Activated CD4-positive, alpha-beta T cell treated with anti-CD3 and anti-CD28 coated beads, Interleukin-2, amount 10 ng/mL, durations not matched to agents 24 days and 14 days (primary cell): ENCODE measurements at regions of chr4 and their contacts with region 1.

Region 1: GRCh38 chr4:81471588-81472288 is at the start of gene RASGEF1B:
- DNase-seq: peak; percentile 98
- H3K4me3 Mint-ChIP-seq: peak within 1 kb of the TSS; percentile 88
- H3K27ac Mint-ChIP-seq: peak within 1 kb of the TSS; percentile 93
- H3K4me1 Mint-ChIP-seq: peaks cover 30% of the 10 kb centered on the region
- H3K27me3 Mint-ChIP-seq: peaks cover 12% of the 10 kb centered on the region
- total RNA-seq, gene RASGEF1B: 3.9 and 5.5 TPM in 2 replicates

Region 2: GRCh38 chr4:81214881-81215868 is 256.6 kb before region 1 on chr4 and contains the start of gene PRKG2:
- intact Hi-C with region 1: no loop called
- DNase-seq: no peak
- H3K4me3 Mint-ChIP-seq: peak within 1 kb of the TSS; percentile 77
- H3K27ac Mint-ChIP-seq: no peak within 1 kb of the TSS
- H3K4me1 Mint-ChIP-seq: peaks cover 6% of the 10 kb centered on the region
- H3K27me3 Mint-ChIP-seq: peaks cover 40% of the 10 kb centered on the region
- total RNA-seq, gene PRKG2: 0.07 and 0.12 TPM in 2 replicates

Region 3: GRCh38 chr4:81405894-81406401 is 65.8 kb before region 1 on chr4:
- intact Hi-C with region 1: loop called (anchors 2 kb)
- DNase-seq: peak; percentile 84
- H3K4me3 Mint-ChIP-seq: no peak overlapping the region
- H3K27ac Mint-ChIP-seq: no peak overlapping the region
- H3K4me1 Mint-ChIP-seq: peaks cover 3% of the 10 kb centered on the region
- H3K27me3 Mint-ChIP-seq: no peaks in the 10 kb centered on the region

Region 4: GRCh38 chr4:81460191-81460701 is 11.5 kb before region 1 on chr4:
- intact Hi-C with region 1: no loop called
- DNase-seq: no peak
- H3K4me3 Mint-ChIP-seq: no peak overlapping the region
- H3K27ac Mint-ChIP-seq: no peak overlapping the region
- H3K4me1 Mint-ChIP-seq: peaks cover 2% of the 10 kb centered on the region
- H3K27me3 Mint-ChIP-seq: no peaks in the 10 kb centered on the region

Region 5: DNA sequence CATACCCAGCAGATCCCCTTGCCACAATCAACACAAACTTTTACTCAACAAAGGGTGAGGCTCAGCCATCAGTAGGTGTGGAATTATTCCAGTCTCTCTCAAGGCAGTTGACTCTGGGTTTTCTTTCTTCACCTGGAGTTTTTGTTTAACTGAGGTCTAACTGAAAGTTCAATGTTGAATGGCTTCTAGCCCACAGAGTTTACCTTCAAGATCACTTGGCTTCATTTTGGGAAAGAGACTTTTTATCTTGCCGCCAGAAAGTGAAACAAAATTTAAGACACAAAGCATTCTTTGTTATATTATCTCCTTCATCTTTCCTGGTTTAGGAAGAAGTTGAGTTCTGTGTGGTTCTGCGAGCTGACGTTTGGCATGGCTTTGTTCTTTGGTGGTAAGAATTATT is 83.8 kb after region 1 on chr4:
- intact Hi-C with region 1: loop called (anchors 5 kb)
- DNase-seq: no peak
- H3K4me3 Mint-ChIP-seq: no peak overlapping the region
- H3K27ac Mint-ChIP-seq: no peak overlapping the region
- H3K4me1 Mint-ChIP-seq: peaks cover 6% of the 10 kb centered on the region
- H3K27me3 Mint-ChIP-seq: no peaks in the 10 kb centered on the region

Region 6: DNA sequence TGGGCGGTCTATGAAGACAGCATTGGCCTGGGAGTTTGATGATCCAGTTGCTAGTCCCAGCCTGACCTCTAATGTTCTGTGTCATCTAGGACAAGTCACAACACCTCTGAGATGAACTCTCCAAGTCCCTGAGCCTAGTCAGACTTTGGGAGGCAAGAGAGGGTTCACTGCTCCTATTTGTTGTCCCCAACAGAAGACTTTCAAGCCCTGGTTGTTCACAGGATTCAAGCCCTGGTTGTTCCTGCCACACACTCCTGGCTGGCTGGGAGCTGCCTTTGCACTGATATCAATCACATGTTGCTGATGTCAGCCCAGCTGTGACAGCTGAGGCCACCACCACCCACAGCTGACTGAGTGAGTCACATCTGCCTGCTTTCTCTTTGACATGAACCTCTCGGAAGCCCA is 253.2 kb after region 1 on chr4:
- intact Hi-C with region 1: loop called (anchors 1 kb)
- DNase-seq: peak; percentile 81
- H3K4me3 Mint-ChIP-seq: no peak overlapping the region
- H3K27ac Mint-ChIP-seq: peak overlapping the region; percentile 72
- H3K4me1 Mint-ChIP-seq: peaks cover 9% of the 10 kb centered on the region
- H3K27me3 Mint-ChIP-seq: peaks cover 10% of the 10 kb centered on the region

Region 7: DNA sequence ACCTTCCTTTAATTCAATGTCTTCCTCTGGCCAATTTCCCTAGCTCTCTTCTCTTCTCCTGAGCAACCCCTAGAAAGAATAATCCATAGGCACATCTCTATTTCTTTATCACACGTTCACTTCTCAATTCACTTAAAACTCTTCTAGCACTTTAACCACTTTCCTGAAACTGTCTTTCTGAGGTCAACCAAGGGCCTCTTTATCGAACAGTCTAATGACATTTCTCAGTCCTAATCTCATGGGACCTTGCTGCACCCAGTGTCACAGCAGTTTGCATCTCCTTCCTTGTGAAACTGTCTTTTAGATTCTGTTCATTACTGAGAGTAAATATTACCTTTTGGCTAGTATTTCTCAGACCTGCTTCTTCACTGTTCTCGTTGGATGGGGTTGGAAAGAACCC is 285.2 kb after region 1 on chr4:
- intact Hi-C with region 1: no loop called
- DNase-seq: no peak
- H3K4me3 Mint-ChIP-seq: no peak overlapping the region
- H3K27ac Mint-ChIP-seq: no peak overlapping the region
- H3K4me1 Mint-ChIP-seq: peaks cover 2% of the 10 kb centered on the region
- H3K27me3 Mint-ChIP-seq: no peaks in the 10 kb centered on the region

Region 8: DNA sequence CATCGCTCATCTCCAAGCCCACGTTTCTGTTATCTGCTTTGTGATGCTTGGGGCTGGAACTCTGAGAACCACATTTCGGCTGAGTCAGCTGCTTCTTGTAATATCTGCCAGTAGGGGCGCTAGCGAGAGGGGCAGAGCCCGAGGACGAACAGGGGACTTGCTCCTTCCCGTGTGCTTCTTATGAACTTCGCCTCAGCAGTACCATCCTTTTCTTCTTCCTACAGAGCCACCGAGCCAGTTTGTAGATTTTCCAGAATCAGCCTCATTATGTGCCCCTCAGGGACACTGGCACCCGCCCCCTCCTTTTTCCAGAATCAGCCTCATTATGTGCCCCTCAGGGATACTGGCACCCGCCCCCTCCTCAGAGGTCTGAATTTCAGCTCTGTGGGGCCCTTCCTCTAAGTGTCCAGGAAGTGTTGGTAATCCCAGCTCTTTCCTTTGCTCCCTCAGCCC is 441.7 kb after region 1 on chr4:
- intact Hi-C with region 1: loop called (anchors 5 kb)
- DNase-seq: peak; percentile 85
- H3K4me3 Mint-ChIP-seq: no peak overlapping the region
- H3K27ac Mint-ChIP-seq: no peak overlapping the region
- H3K4me1 Mint-ChIP-seq: peaks cover 4% of the 10 kb centered on the region
- H3K27me3 Mint-ChIP-seq: peaks cover 9% of the 10 kb centered on the region

Region 9: GRCh38 chr4:82284858-82285805 is 813.4 kb after region 1 on chr4:
- intact Hi-C with region 1: loop called (anchors 1 kb)
- DNase-seq: peak; percentile 100
- H3K4me3 Mint-ChIP-seq: peak overlapping the region; percentile 72
- H3K27ac Mint-ChIP-seq: peak overlapping the region; percentile 48
- H3K4me1 Mint-ChIP-seq: peaks cover 12% of the 10 kb centered on the region
- H3K27me3 Mint-ChIP-seq: peaks cover 27% of the 10 kb centered on the region